ENCODE measurements at regions of chr1 and their contacts with region 1.

Region 1: GRCh38 chr1:84753516-84754385 is 63.5 kb upstream of the SSX2IP start:
- DNase-seq: peak; percentile 83

Region 2: GRCh38 chr1:83931658-83932253 is 822.0 kb before region 1 on chr1:
- intact Hi-C with region 1: loop called (anchors 10 kb)
- DNase-seq: no peak

Region 3: DNA sequence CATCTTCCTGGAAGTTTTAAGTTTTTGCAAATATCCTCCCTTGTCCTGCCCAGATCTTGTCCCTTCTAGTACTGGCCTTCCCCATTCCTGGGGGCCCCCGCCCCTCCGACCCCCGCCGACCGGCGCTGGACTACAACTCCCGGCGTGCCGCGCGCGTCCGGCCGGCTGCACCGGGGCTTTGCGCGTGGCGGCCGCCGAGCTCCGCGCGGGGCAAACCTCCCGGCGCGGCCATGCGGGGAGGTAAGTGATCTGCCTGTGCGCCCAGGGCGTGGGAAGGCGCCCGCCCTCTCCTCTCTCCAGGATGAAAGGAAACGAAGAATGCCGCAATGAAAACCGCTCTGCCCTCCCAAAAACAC is 455.4 kb before region 1 on chr1:
- intact Hi-C with region 1: loop called (anchors 10 kb)
- DNase-seq: peak; percentile 78

Region 4: DNA sequence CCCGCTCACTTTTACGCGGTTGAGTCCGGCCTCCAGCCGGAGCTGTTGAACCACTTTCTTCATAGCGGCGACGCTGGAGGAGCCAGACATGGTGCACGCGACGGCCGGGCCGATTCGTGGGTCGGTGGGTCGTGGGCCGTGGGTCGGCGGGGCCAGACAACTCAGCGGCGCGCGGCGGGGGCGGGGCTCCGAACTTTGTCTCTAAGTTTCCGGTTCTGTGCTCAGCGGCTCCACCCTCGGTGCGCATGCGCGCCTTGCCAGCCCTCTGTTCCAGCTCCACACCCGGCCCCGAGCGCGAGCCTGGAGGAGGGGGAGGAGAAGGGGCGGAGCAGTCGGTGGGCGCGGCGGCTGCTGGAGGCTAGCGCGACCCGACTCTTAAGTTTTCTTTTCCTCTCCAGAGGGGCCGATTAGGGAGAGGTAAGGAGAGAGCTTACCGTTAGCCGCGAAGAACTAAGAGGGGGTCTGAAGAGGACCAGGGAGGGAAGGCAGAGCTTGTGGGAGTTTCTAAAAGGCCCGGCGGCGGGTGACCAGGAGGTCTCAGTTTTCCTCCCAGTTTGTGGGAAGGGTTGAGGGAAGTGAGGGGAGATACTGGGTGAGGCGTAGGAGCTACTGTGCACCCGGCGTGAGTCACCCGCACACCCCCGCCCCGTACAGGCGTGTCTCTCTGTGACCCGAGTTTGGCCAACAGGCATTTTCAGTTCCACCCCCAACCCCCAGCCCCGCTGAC is 247.6 kb before region 1 on chr1 and contains the starts of genes GNG5 and SPATA1:
- intact Hi-C with region 1: loop called (anchors 10 kb)
- DNase-seq: peak; percentile 100
- total RNA-seq, gene GNG5: 133 TPM
- total RNA-seq, gene SPATA1: 1.2 TPM

Region 5: GRCh38 chr1:84690397-84691121 is 63.2 kb before region 1 on chr1 and contains the start of gene SSX2IP:
- intact Hi-C with region 1: loop called (anchors 2 kb)
- DNase-seq: peak; percentile 98
- total RNA-seq, gene SSX2IP: 12.0 TPM